ENCODE measurements at regions of chr3 and their contacts with region 1.

Region 1: GRCh38 chr3:48439820-48440589 is at the starts of genes CCDC51 and TMA7:
- DNase-seq: peak; percentile 72
- H3K4me3 ChIP-seq: peak within 1 kb of the TSS; percentile 98
- CTCF ChIP-seq: no peak

Region 2: DNA sequence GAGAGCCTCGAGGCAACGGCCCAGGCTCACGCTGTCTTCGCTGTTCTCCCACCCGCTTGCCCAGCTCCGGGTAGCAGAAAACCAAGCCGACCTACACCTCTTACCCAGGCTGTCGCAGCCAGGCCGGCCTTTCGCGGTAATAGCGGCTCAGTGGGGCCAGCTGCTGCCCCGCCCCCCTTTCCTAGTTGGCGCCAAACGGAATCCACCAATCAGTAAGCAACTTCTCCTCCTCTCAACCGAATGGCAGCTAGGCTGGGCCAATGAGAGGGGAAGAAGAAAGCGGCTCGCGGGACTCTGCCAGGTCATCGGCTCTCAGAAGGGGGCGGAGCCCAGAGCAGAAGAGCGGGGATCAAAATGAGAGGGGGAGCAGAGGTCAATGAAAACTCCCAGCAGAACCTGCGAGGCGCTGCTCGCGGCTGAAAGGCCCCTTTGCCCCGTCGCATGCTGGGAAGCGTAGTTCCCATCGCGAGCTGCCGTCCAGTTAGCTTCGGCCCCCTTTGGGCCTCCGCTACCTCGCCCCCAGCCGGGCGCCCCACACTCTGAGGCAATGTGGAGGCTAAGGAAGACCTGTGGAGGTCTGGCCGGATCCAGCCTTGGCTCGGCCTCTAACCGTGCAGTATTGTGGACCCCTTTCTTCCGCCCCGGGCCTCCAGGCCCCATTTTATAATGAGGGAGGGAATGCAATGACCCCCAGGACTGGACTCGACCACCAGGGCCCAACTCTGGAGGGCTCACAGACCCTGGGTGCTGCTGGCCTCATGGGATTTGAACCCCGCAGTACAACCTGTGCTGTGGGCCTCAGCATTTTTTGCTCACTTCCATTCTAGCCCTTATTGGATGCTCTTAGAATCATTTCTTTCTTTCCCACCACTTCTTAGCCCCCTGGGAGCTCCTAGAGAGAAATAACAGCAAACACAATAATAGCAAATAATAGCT is 251.5 kb before region 1 on chr3 and contains the start of gene CDC25A:
- CTCF ChIA-PET with region 1: interaction called, 139 read pairs
- POLR2A ChIA-PET with region 1: no interaction called
- DNase-seq: peak; percentile 83
- H3K4me3 ChIP-seq: peak within 1 kb of the TSS; percentile 92
- CTCF ChIP-seq: no peak

Region 3: DNA sequence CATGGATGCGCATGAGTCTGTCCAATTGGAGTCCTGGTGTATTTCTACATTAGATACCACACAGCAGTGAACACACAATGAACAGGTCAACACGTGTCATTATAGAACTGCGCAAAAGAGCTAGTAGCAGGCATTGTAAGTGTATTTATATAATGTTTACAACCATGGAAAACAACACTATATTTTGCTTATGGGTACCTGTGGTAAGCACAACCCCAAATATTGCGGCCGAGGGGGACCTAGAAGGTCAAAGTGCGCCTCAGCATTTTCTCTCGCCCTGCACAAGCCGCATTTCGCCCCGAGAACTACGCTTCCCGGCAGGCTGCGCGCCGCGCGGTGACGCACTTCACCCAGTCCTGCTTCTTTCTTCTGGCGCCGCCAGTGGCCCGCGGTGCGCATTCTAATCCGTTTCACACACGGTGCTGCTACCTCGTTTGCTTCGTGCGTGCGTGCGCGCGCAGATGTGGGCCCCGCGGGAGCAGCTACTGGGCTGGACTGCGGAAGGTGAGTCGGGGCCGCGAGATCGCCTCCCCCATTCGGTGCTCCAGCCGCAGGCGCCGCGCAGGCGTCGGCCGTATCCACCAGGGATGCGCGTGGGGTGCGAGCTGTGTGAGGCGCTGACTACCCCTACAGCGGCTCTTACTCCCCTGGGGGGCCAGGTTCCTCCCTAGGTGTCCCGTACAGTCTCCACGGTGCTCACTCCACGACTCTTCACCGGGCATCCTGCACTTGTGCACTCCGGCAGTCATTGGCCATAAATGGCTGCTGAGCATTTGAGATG is 199.1 kb before region 1 on chr3 and contains the start of gene ZNF589:
- CTCF ChIA-PET with region 1: interaction called, 47 read pairs
- POLR2A ChIA-PET with region 1: no interaction called
- DNase-seq: peak; percentile 19
- H3K4me3 ChIP-seq: peak within 1 kb of the TSS; percentile 89
- CTCF ChIP-seq: peak; percentile 31

Region 4: DNA sequence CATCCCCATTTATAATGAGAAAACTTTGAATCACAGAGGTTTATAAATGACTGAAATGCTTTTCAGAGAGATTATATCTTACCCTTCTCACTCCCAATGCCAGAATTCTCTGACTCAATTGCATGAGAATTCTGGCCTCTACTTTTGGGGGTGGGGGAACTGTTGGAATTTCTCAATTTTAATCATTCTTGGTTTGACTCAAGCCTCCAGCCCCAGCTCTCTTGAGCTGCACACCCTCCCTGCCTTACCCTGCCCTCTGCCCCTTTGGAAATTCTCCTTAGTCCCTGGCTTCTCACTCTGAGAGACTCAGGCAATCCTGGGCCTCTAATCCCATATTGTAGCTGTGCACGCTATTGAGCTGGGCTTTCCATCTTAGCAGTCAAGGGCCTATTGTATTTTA is 154.9 kb before region 1 on chr3:
- CTCF ChIA-PET with region 1: interaction called, 948 read pairs
- POLR2A ChIA-PET with region 1: no interaction called
- DNase-seq: peak; percentile 21
- H3K4me3 ChIP-seq: no peak overlapping the region
- CTCF ChIP-seq: no peak

Region 5: GRCh38 chr3:48388966-48389365 is 51.0 kb before region 1 on chr3:
- CTCF ChIA-PET with region 1: interaction called, 22 read pairs
- POLR2A ChIA-PET with region 1: no interaction called
- DNase-seq: no peak
- H3K4me3 ChIP-seq: no peak overlapping the region
- CTCF ChIP-seq: no peak

Region 6: DNA sequence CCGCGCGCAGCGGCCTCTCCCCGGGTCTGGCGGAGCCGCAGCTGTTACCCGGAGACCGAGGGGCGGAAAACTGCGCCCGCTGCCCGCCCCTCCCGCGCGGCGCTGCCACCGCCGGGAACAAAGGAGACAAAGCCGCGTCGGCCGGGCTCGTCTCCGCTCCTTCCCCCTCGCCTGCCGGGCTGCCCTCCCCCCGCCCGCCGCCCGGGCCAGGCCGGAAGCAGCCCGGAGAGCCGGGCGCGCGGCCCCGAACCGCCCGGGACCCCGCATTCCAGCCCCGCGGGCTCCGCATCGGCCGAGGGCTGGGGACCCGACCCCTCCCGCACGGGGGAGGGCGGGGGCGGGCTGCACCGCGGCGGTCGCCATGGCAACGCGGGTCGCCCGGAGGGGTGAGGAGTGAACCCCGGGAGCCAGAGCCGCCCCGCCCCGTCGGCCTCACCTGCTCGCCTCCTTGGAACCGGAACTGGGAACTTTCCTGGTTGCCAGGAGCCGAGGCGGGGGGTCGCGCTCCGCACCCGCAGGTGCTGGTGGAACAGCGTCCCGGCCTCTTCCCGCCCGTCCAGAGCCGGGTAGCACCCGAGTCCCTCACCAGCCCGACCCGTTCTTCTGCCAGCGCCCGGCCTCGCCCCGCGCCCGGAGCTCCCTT is 10.6 kb before region 1 on chr3:
- CTCF ChIA-PET with region 1: interaction called, 161 read pairs
- POLR2A ChIA-PET with region 1: no interaction called
- DNase-seq: no peak
- H3K4me3 ChIP-seq: peak overlapping the region; percentile 68
- CTCF ChIP-seq: no peak

Region 7: GRCh38 chr3:48556793-48557626 is 117.0 kb after region 1 on chr3 and contains the start of gene PFKFB4:
- CTCF ChIA-PET with region 1: interaction called, 16 read pairs
- POLR2A ChIA-PET with region 1: interaction called, 3 read pairs
- DNase-seq: peak; percentile 93
- H3K4me3 ChIP-seq: peak within 1 kb of the TSS; percentile 86
- CTCF ChIP-seq: peak; percentile 1

Region 8: DNA sequence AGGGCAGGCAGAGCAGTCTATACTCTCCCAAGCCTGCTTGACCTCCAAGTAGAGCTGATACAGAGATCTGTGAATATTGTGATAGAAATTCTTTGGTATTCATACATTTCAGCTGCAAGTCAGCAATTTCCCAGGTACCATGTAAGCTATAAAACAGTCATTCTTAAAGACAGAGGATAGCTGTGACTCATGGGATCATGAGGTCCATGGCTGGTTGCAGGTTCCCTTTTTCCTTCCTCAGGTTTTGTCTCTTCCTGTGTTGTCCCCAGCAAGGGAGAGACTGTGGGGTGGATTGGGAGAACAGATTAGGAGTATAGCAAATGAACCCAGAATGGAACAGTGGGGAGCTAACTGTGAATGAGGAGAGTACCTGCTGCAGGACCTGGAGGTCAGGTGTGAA is 544.7 kb after region 1 on chr3:
- CTCF ChIA-PET with region 1: no interaction called
- POLR2A ChIA-PET with region 1: no interaction called
- DNase-seq: no peak
- H3K4me3 ChIP-seq: no peak overlapping the region
- CTCF ChIP-seq: no peak

Measured in AG04449 (cell line).